ENCODE measurements at regions of chr16 and their contacts with region 1.

Region 1: GRCh38 chr16:30747799-30748634 is at the start of gene PHKG2:
- DNase-seq: peak; percentile 98
- ATAC-seq: peak; percentile 99
- H3K4me3 ChIP-seq: peak within 1 kb of the TSS; percentile 22 to 84 (median 69)
- H3K4me3 Mint-ChIP-seq: peak within 1 kb of the TSS; percentile 92
- H3K27ac ChIP-seq: peak within 1 kb of the TSS; percentile 45 to 75
- H3K27ac Mint-ChIP-seq: peak within 1 kb of the TSS; percentile 93
- H3K4me1 ChIP-seq: peaks cover 3 to 5% of the 10 kb centered on the region in 2 donors
- H3K4me1 Mint-ChIP-seq: peaks cover 19% of the 10 kb centered on the region
- H3K27me3 ChIP-seq: no peaks in the 10 kb centered on the region
- H3K27me3 Mint-ChIP-seq: no peaks in the 10 kb centered on the region
- CTCF ChIP-seq: no peak
- total RNA-seq, gene PHKG2: 54.1 and 55.7 TPM in 2 replicates

Region 2: GRCh38 chr16:30767767-30768415 is 19.9 kb after region 1 on chr16:
- CTCF ChIA-PET with region 1: no interaction called
- POLR2A ChIA-PET with region 1: no interaction called
- intact Hi-C with region 1: no loop called
- DNase-seq: peak; percentile 69
- ATAC-seq: peak; percentile 76
- H3K4me3 ChIP-seq: no peak overlapping the region
- H3K4me3 Mint-ChIP-seq: no peak overlapping the region
- H3K27ac ChIP-seq: no peak overlapping the region
- H3K27ac Mint-ChIP-seq: peak overlapping the region; percentile 69
- H3K4me1 ChIP-seq: peaks cover 8 to 28% of the 10 kb centered on the region in 2 donors
- H3K4me1 Mint-ChIP-seq: peaks cover 31% of the 10 kb centered on the region
- H3K27me3 ChIP-seq: no peaks in the 10 kb centered on the region
- H3K27me3 Mint-ChIP-seq: no peaks in the 10 kb centered on the region
- CTCF ChIP-seq: no peak

Region 3: GRCh38 chr16:30813821-30814189 is 65.8 kb after region 1 on chr16:
- CTCF ChIA-PET with region 1: interaction called, 4 read pairs
- POLR2A ChIA-PET with region 1: interaction called, 6 read pairs
- intact Hi-C with region 1: loop called (anchors 1 kb)
- DNase-seq: no peak
- ATAC-seq: no peak
- H3K4me3 ChIP-seq: peak overlapping the region; percentile 42 to 66 (median 57)
- H3K4me3 Mint-ChIP-seq: peak overlapping the region; percentile 88
- H3K27ac ChIP-seq: peak overlapping the region; percentile 65 to 69
- H3K27ac Mint-ChIP-seq: peak overlapping the region; percentile 85
- H3K4me1 ChIP-seq: peaks cover 9 to 15% of the 10 kb centered on the region in 2 donors
- H3K4me1 Mint-ChIP-seq: peaks cover 16% of the 10 kb centered on the region
- H3K27me3 ChIP-seq: no peaks in the 10 kb centered on the region
- H3K27me3 Mint-ChIP-seq: peaks cover 3% of the 10 kb centered on the region
- CTCF ChIP-seq: no peak

Region 4: GRCh38 chr16:30910427-30911029 is 162.5 kb after region 1 on chr16:
- CTCF ChIA-PET with region 1: no interaction called
- POLR2A ChIA-PET with region 1: no interaction called
- intact Hi-C with region 1: no loop called
- DNase-seq: no peak
- ATAC-seq: no peak
- H3K4me3 ChIP-seq: no peak overlapping the region
- H3K4me3 Mint-ChIP-seq: no peak overlapping the region
- H3K27ac ChIP-seq: no peak overlapping the region
- H3K27ac Mint-ChIP-seq: no peak overlapping the region
- H3K4me1 ChIP-seq: no peaks in the 10 kb centered on the region
- H3K4me1 Mint-ChIP-seq: peaks cover 3% of the 10 kb centered on the region
- H3K27me3 ChIP-seq: no peaks in the 10 kb centered on the region
- H3K27me3 Mint-ChIP-seq: no peaks in the 10 kb centered on the region
- CTCF ChIP-seq: no peak

Measured in B cell (primary cell).